Panc1 (cell line): ENCODE measurements at regions of chr5 and their contacts with region 1.

Region 1: DNA sequence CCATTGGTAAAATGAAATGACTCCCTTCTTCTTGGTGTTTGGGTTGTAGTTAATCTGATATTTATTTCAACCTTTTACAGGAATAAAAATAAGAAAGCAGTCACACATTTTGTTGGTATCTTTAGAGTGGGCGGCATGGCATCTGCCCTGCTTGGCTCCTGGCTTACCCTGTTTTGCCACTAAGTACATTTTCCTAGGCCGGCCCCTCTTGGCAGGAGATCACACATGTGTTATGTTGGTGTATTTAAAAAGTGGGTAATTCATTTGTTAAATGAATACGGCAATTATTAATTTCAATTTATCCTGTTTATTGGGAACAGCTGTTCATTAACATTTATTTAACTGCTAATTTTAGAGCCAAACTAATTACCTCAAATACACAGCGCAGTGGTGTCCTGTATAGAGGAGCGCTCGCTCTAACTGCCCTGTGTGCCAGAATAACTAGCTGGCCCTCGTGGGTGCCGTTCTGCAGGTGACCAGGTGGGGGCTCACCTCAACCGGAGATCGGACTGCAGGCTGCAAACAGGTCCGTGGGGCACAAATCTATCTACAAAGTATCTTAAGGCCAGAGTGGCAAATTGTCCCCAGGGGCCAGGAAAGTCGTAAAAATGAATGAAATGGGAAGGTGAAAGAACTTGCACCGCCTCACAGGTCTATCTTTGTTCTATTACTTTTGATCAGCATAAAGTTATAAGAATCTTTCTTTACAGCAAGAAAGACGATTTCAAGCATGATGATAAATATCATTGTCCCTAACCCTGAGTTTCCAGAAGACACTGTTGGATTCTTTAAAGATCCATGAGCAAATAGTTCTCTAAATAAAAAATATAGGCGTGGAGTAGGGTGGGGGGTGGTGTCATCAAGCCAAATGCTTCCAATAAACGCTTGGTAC is 26.2 kb upstream of the GPR151 start:
- DNase-seq: peak; percentile 41
- ATAC-seq: peak; percentile 97
- H3K4me3 ChIP-seq: no peak overlapping the region
- H3K27ac ChIP-seq: no peak overlapping the region
- H3K4me1 ChIP-seq: no peaks in the 10 kb centered on the region
- H3K27me3 ChIP-seq: no peaks in the 10 kb centered on the region
- CTCF ChIP-seq: peak; percentile 96

Region 2: GRCh38 chr5:147188200-147189108 is 646.2 kb after region 1 on chr5:
- CTCF ChIA-PET with region 1: interaction called, 11 read pairs
- POLR2A ChIA-PET with region 1: no interaction called
- in situ Hi-C with region 1: no loop called
- intact Hi-C with region 1: no loop called
- DNase-seq: peak; percentile 51
- ATAC-seq: peak; percentile 94
- H3K4me3 ChIP-seq: peak overlapping the region; percentile 11 to 55; a peak in 3 of 4 replicates
- H3K27ac ChIP-seq: no peak overlapping the region
- H3K4me1 ChIP-seq: no peaks in the 10 kb centered on the region
- H3K27me3 ChIP-seq: no peaks in the 10 kb centered on the region; the same call in 1 of the 2 replicates
- CTCF ChIP-seq: peak; percentile 79